ENCODE measurements at regions of chr5 and their contacts with region 1.

Region 1: GRCh38 chr5:147188200-147189108 is 46.4 kb upstream of the STK32A start:
- DNase-seq: peak in 1 of 2 donors; percentile 48
- H3K4me3 ChIP-seq: no peak overlapping the region
- H3K27ac ChIP-seq: no peak overlapping the region
- H3K4me1 ChIP-seq: no peaks in the 10 kb centered on the region
- H3K27me3 ChIP-seq: no peaks in the 10 kb centered on the region
- CTCF ChIP-seq: peak; percentile 85 to 88

Region 2: DNA sequence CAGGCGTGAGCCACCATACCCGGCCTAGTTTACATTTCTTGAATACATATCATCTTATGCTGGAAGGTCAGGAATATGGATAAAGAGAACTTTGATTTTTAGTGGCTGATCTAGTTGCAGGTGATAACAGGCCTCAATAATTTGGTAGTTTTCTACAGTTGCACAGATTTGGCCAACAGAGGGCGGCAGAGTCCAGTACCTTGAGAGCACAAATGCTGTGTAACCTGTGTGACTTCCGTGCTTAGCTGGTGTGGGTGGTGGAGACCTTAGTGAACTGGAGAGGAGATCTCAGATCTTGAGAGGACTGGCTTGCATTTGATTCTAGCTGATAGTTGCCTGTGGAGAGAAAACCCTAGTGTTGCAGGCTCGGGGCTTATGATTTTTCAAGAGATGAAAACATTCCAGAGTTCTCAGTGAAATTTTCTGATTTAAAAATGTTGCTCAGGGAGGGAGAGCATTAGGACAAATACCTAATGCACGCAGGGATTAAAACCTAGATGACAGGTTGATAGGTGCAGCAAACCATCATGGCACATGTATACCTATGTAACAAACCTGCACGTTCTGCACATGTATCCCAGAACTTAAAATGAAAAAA is 655.1 kb before region 1 on chr5:
- intact Hi-C with region 1: loop called (anchors 5 kb)
- DNase-seq: peak; percentile 64 to 75
- H3K4me3 ChIP-seq: no peak overlapping the region
- H3K27ac ChIP-seq: no peak overlapping the region
- H3K4me1 ChIP-seq: no peaks in the 10 kb centered on the region
- H3K27me3 ChIP-seq: no peaks in the 10 kb centered on the region
- CTCF ChIP-seq: peak; percentile 75 to 76

Region 3: DNA sequence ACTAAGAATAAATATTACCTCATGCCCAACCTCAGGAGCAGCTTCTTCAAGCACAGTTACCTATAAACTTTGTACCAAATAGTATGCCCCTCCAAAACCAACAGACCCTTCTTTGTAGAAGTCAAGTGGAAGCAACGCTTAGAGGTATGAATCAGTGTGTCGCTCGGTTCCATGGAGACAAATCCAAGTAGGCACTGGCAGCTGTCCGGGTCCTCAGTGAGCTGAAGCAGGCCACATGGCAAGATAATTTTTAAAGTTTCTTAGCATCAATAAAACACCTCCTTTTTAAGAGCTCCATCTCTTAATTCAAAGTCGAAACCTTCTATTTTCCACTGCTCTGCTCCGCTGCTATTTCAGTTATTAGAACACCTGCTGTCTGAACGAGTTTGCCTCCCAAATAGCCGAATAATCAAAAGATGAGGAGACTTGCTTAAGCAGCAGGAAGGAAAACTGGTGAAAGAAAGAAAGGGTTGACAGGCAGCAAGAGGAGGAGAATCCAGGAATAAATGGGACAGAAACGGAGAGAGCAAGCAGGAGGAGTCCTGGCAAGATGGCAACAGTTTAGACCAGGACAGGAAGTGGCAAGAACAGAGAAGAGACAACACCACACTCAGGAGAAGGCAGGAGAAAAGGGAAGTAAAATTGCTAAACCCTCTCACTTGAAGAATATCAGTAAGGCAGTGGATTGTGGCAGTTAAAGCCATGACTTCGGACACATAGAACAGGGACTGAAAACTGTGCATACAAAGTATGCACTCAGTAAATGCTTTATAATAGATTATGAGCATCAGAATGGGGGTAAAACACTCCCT is 374.9 kb before region 1 on chr5:
- intact Hi-C with region 1: no loop called
- DNase-seq: no peak
- H3K4me3 ChIP-seq: no peak overlapping the region
- H3K27ac ChIP-seq: no peak overlapping the region
- H3K4me1 ChIP-seq: peaks cover 0 to 9% (median 0%) of the 10 kb centered on the region in 4 donors
- H3K27me3 ChIP-seq: no peaks in the 10 kb centered on the region
- CTCF ChIP-seq: no peak

Region 4: GRCh38 chr5:146906803-146907202 is 281.7 kb before region 1 on chr5:
- intact Hi-C with region 1: no loop called
- DNase-seq: no peak
- H3K4me3 ChIP-seq: no peak overlapping the region
- H3K27ac ChIP-seq: no peak overlapping the region
- H3K4me1 ChIP-seq: no peaks in the 10 kb centered on the region
- H3K27me3 ChIP-seq: no peaks in the 10 kb centered on the region
- CTCF ChIP-seq: no peak